ENCODE measurements at regions of chr19 and their contacts with region 1.

Region 1: GRCh38 chr19:41801792-41802211 is 5.4 kb downstream of the CEACAM3 start:
- DNase-seq: no peak
- ATAC-seq: peak; percentile 71
- H3K4me3 Mint-ChIP-seq: peak overlapping the region; percentile 28
- H3K27ac Mint-ChIP-seq: peak overlapping the region; percentile 79
- H3K4me1 Mint-ChIP-seq: peaks cover 48% of the 10 kb centered on the region
- H3K27me3 Mint-ChIP-seq: no peaks in the 10 kb centered on the region
- CTCF ChIP-seq: no peak

Region 2: DNA sequence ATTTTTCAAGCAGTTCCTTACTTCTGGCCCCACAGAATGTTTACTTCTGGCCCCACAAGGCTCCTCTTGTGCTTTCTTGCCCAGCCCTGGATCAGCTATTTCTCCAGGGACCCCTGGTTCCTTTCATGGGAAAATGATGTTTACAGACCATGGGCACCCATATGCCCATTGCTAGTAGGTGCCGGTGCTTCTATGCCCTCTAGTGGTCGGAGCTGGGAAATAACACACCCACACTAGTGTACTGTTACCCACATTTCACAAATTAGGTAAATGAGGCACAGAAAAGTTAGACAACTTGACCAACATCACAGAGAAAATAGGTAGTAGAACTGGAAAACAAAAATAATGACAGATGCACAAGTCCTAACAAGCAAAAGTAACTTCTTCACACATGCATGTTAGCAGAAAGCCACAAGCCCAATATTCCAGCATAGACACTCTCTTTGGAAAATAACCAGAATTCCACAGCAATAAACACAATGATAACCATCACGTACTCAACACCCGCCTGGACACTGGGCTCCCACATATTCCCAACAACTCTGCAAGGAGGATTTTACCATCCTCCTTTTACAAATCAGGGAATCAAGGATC is 47.8 kb before region 1 on chr19:
- CTCF ChIA-PET with region 1: interaction called, 13 read pairs
- POLR2A ChIA-PET with region 1: no interaction called
- intact Hi-C with region 1: no loop called
- DNase-seq: peak; percentile 35
- ATAC-seq: peak; percentile 90
- H3K4me3 Mint-ChIP-seq: no peak overlapping the region
- H3K27ac Mint-ChIP-seq: no peak overlapping the region
- H3K4me1 Mint-ChIP-seq: peaks cover 2% of the 10 kb centered on the region
- H3K27me3 Mint-ChIP-seq: peaks cover 13% of the 10 kb centered on the region
- CTCF ChIP-seq: peak; percentile 5

Region 3: DNA sequence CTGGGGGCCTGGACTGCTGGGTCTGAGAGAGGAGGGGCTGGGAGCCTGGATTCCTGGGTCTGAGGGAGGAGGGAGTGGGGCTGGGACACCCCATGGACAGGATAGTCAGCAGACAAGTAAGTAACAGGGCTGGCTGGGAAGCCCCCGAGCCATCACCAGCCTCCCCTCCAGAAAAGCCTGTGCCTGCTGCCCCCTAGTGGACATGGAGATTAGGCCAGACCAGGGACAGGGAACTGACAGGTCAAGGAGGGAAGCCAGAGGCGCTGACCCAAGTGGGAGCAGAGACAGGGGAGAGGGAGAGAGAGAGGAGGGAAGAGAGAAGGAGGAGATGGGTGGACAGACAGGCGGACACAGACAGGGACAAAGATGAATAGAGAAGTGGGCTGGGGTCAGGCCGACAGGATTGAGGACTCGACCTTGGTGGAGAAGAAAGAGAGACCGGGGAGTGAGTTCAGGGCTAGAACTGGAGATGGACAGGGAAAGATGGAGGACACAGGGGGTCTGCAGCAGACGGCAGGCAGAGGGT is 133.1 kb after region 1 on chr19:
- CTCF ChIA-PET with region 1: no interaction called
- POLR2A ChIA-PET with region 1: no interaction called
- intact Hi-C with region 1: no loop called
- DNase-seq: peak; percentile 65
- ATAC-seq: peak; percentile 84
- H3K4me3 Mint-ChIP-seq: no peak overlapping the region
- H3K27ac Mint-ChIP-seq: peak overlapping the region; percentile 79
- H3K4me1 Mint-ChIP-seq: peaks cover 63% of the 10 kb centered on the region
- H3K27me3 Mint-ChIP-seq: no peaks in the 10 kb centered on the region
- CTCF ChIP-seq: no peak